Activated CD4-positive, alpha-beta T cell treated with anti-CD3 and anti-CD28 coated beads, Interleukin-2, amount 10 ng/mL, durations not matched to agents 7 days and 5 days (primary cell): ENCODE measurements at regions of chr17 and their contacts with region 1.

Region 1: GRCh38 chr17:35774499-35774898 is 13.8 kb downstream of the C17orf50 start:
- DNase-seq: no peak
- H3K4me3 Mint-ChIP-seq: no peak overlapping the region
- H3K27ac Mint-ChIP-seq: no peak overlapping the region
- H3K4me1 Mint-ChIP-seq: no peaks in the 10 kb centered on the region
- H3K27me3 Mint-ChIP-seq: peaks cover 15% of the 10 kb centered on the region

Region 2: DNA sequence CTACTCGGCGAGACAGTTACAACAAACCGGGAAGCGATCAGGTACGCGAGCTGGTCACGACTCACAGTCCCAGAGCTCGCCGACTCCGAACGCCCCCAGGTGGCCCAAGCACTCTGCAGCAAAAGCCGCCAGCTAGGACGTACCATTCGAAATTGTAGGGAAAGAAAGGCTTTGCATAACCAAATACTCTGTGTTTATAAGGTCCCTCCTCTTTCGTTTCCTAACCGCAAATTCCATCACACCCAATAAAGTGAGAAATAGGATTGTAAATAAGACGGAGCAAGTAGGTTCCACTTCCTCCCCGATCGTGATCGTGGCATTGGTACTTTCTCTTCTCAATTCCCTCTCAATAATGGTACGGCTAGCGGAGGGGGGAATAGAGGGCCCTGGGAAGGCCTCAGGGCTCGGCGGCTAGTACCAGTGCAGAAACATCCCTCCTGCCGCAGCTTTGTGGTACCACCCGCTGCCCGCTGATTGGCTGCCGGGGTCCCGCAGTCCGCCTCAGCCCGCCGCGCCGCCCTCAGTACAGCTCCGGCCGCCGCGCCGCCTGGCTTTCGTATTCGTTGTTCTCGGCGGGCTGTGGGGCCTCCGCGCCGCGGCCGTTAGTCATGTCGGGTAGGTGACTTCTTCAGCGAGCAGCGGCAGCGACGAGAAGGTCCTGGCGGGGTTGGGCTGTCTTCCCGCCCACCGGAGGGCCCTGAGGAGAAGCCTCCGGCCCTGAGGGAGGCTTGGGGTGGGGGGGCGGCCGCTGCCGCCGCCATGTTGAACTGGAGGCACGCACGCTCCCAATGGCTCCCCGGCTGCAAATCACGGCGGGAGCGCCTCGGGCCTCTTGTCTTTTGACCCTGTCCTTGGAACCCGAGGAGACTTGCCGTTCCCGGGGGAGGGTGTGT is 34.7 kb after region 1 on chr17 and contains the start of gene TAF15:
- CTCF ChIA-PET with region 1: interaction called, 14 read pairs
- POLR2A ChIA-PET with region 1: no interaction called
- DNase-seq: peak; percentile 97
- H3K4me3 Mint-ChIP-seq: peak within 1 kb of the TSS; percentile 94
- H3K27ac Mint-ChIP-seq: peak within 1 kb of the TSS; percentile 96
- H3K4me1 Mint-ChIP-seq: peaks cover 58% of the 10 kb centered on the region
- H3K27me3 Mint-ChIP-seq: no peaks in the 10 kb centered on the region
- total RNA-seq, gene TAF15: 274 to 311 TPM

Region 3: DNA sequence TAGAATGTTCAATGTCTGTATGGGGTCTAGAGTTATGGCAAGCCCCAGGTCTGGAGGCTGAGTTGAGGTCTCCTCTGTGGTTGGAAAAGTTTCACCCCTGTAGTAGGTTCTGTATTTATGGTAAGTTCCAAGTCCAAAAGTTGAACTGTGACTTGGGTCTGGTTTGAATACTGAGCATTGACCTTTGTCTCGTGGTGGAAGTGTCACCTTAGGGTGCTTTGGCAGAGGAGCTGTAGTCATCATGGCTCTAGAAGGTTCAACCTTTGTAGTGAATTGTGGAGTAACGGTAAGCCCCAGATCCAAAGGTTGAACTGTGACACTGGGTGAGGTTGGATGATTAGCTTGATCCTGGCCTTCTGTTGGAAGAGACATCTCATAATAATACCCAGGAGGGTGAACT is 138.4 kb after region 1 on chr17:
- CTCF ChIA-PET with region 1: no interaction called
- POLR2A ChIA-PET with region 1: no interaction called
- DNase-seq: no peak
- H3K4me3 Mint-ChIP-seq: no peak overlapping the region
- H3K27ac Mint-ChIP-seq: no peak overlapping the region
- H3K4me1 Mint-ChIP-seq: peaks cover 10% of the 10 kb centered on the region
- H3K27me3 Mint-ChIP-seq: no peaks in the 10 kb centered on the region

Region 4: GRCh38 chr17:35923609-35924114 is 149.2 kb after region 1 on chr17:
- CTCF ChIA-PET with region 1: no interaction called
- POLR2A ChIA-PET with region 1: no interaction called
- DNase-seq: no peak
- H3K4me3 Mint-ChIP-seq: no peak overlapping the region
- H3K27ac Mint-ChIP-seq: no peak overlapping the region
- H3K4me1 Mint-ChIP-seq: peaks cover 49% of the 10 kb centered on the region
- H3K27me3 Mint-ChIP-seq: no peaks in the 10 kb centered on the region